ENCODE measurements at regions of chr7 and their contacts with region 1.

Region 1: GRCh38 chr7:76011442-76011861 is 17.1 kb upstream of the TMEM120A start:
- DNase-seq: no peak
- ATAC-seq: no peak
- H3K4me3 ChIP-seq: no peak overlapping the region
- H3K4me3 Mint-ChIP-seq: no peak overlapping the region
- H3K27ac ChIP-seq: no peak overlapping the region
- H3K27ac Mint-ChIP-seq: no peak overlapping the region
- H3K4me1 ChIP-seq: peaks cover 7 to 26% of the 10 kb centered on the region in 2 experiments
- H3K4me1 Mint-ChIP-seq: peaks cover 25 to 35% (median 28%) of the 10 kb centered on the region in 3 donors
- H3K27me3 ChIP-seq: peaks cover 0 to 6% of the 10 kb centered on the region in 2 experiments
- H3K27me3 Mint-ChIP-seq: no peaks in the 10 kb centered on the region

Region 2: GRCh38 chr7:76037310-76037709 is 25.9 kb after region 1 on chr7:
- CTCF ChIA-PET with region 1: no interaction called
- POLR2A ChIA-PET with region 1: interaction called in 1 of 2 experiments, 13 read pairs
- DNase-seq: no peak
- ATAC-seq: no peak
- H3K4me3 ChIP-seq: no peak overlapping the region
- H3K4me3 Mint-ChIP-seq: no peak overlapping the region
- H3K27ac ChIP-seq: no peak overlapping the region
- H3K27ac Mint-ChIP-seq: no peak overlapping the region
- H3K4me1 ChIP-seq: no peaks in the 10 kb centered on the region
- H3K4me1 Mint-ChIP-seq: peaks cover 0 to 8% (median 7%) of the 10 kb centered on the region in 3 donors
- H3K27me3 ChIP-seq: no peaks in the 10 kb centered on the region
- H3K27me3 Mint-ChIP-seq: no peaks in the 10 kb centered on the region

Region 3: DNA sequence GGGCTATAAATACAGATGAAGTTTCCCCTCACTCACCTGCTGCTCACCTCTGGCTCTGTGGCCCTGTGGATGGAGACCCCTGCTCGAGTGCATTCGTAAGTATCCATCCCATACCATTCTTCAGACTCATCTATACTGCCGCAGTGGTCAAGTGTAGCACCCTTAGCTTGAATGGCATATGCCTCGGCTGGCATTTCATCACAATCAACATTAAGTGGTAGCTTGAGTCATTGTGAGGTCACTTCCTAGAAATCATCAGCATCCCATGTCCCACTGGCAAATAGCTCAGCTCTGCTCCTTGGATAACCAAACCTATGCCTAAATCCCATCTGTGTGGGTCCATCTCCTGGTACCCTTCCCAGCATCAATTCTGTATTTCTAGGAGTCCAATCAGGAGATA is 74.6 kb after region 1 on chr7:
- CTCF ChIA-PET with region 1: no interaction called
- POLR2A ChIA-PET with region 1: no interaction called
- DNase-seq: no peak
- ATAC-seq: no peak
- H3K4me3 ChIP-seq: no peak overlapping the region
- H3K4me3 Mint-ChIP-seq: no peak overlapping the region
- H3K27ac ChIP-seq: no peak overlapping the region
- H3K27ac Mint-ChIP-seq: no peak overlapping the region
- H3K4me1 ChIP-seq: no peaks in the 10 kb centered on the region
- H3K4me1 Mint-ChIP-seq: no peaks in the 10 kb centered on the region
- H3K27me3 ChIP-seq: peaks cover 0 to 22% of the 10 kb centered on the region in 2 experiments
- H3K27me3 Mint-ChIP-seq: peaks cover 3 to 6% of the 10 kb centered on the region in 2 donors

Measured in T-cell (primary cell).